Transverse colon (tissue), 4 donors: ENCODE measurements at regions of chrX and their contacts with region 1.

Region 1: DNA sequence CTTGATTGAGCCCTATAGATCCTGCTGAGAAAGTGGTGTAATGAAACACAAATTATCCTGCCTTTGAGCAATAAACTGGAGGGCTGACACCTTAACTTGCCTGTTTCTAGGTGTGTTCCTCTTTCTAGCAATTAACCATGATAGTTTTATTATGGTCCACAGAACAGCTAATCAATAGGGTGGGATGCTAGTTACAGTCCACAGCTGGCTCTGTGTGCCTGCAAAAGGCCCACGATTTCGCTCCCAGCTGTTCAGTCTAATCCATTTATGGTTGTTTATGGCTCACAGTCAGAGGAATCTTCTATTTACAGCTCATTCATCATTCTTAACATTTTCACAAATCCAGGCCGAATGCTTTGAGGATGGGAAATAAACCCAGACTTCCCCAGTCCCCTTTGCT is 674.9 kb downstream of the SMARCA1 start:
- DNase-seq: no peak
- H3K4me3 ChIP-seq: no peak overlapping the region
- H3K27ac ChIP-seq: no peak overlapping the region
- H3K4me1 ChIP-seq: no peaks in the 10 kb centered on the region
- H3K27me3 ChIP-seq: no peaks in the 10 kb centered on the region
- CTCF ChIP-seq: no peak
- EP300 ChIP-seq: no peak
- POLR2A ChIP-seq: no peak

Region 2: DNA sequence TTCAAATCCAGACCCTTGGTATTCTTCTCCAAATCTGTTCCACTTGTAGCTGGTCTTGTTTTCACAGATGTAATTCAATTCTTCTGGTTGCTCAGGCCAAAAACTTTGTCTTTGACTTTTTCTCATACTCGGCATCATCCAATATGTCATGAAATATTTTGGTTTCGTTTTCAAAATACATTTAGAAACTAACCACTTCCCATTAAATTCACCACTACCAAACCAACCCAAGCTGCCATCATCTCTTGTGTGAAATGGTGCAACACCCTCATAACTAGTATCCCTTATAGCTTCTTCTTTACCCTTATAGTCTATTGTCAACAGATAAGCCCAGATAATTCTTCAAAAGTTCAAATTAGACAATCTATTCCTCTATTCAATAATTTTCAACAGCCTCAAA is 1836.7 kb before region 1 on chrX:
- in situ Hi-C with region 1: no loop called
- intact Hi-C with region 1: loop called (anchors 5 kb)
- DNase-seq: no peak
- H3K4me3 ChIP-seq: no peak overlapping the region
- H3K27ac ChIP-seq: no peak overlapping the region
- H3K4me1 ChIP-seq: no peaks in the 10 kb centered on the region
- H3K27me3 ChIP-seq: no peaks in the 10 kb centered on the region
- CTCF ChIP-seq: no peak
- EP300 ChIP-seq: no peak
- POLR2A ChIP-seq: no peak

Region 3: GRCh38 chrX:128781493-128781892 is 66.9 kb before region 1 on chrX:
- in situ Hi-C with region 1: no loop called
- intact Hi-C with region 1: no loop called
- DNase-seq: peak; percentile 48
- H3K4me3 ChIP-seq: no peak overlapping the region
- H3K27ac ChIP-seq: no peak overlapping the region
- H3K4me1 ChIP-seq: no peaks in the 10 kb centered on the region
- H3K27me3 ChIP-seq: no peaks in the 10 kb centered on the region
- CTCF ChIP-seq: peak in 3 of 5 experiments; percentile 25 to 38 (median 29)
- EP300 ChIP-seq: no peak
- POLR2A ChIP-seq: no peak